HEK293T (cell line): ENCODE measurements at regions of chr3 and their contacts with region 1.

Region 1: GRCh38 chr3:124351430-124352148 is 359.7 kb upstream of the ROPN1 start:
- DNase-seq: peak; percentile 74

Region 2: DNA sequence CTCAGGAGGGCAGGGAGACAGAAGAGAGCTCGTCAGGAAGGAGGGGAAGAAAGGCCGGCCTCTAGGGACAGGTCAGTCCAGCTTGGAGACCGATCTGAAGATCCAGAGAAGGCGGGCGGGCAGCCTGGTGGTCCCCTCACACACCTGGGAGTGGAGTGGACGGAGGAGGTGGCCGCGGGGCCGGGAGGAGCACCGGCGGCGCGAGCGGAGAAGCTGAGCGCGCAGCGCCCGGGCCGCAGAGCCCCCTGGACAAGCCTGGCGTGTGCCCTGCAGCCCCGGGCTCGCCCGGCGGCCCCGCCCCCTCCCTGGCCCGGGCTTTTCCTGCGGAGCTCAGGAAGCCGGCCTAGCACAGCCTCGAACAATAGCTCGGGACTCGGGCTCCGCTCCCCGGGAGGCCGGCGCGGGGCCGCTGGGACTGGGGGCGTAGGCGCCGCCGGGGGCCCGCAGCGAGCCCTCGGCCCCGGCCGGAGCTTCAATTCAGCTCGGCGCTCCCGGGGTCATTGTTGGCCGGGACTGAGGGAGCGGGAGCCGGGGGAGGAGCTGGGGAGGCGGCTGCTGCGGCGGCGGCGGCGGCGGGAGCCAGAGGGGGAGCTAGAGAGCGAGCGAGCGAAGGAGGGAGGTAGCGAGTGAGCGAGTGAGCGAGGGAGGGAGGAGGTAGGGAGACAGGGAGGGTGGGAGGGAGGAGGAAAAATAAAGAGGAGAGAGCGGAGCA is 318.8 kb before region 1 on chr3:
- CTCF ChIA-PET with region 1: interaction called, 13 read pairs
- POLR2A ChIA-PET with region 1: no interaction called
- DNase-seq: peak; percentile 91

Region 3: DNA sequence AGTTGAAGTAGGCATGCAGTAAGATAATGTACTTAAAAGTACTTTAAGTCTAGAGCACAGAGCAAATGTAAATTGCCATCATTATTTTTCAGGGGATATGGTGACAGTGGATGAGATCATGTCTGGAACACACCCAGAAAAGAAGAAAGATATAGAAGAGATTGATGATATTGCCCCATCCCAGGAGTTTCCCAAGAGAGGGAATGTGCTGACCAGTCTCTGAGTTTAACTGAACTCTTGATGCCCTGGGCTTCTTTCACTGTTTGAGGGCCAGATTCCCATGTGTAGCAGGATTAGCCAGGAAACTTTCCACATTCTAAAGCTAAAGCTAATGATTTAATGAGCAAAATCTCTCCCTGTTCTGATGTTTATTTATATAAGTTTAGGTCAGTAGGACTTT is 11.9 kb after region 1 on chr3:
- CTCF ChIA-PET with region 1: no interaction called
- POLR2A ChIA-PET with region 1: no interaction called
- DNase-seq: no peak

Region 4: GRCh38 chr3:124467980-124468902 is 116.7 kb after region 1 on chr3:
- CTCF ChIA-PET with region 1: interaction called, 30 read pairs
- POLR2A ChIA-PET with region 1: no interaction called
- DNase-seq: peak; percentile 82